Mammary epithelial cell (primary cell): ENCODE measurements at regions of chr12 and their contacts with region 1.

Region 1: DNA sequence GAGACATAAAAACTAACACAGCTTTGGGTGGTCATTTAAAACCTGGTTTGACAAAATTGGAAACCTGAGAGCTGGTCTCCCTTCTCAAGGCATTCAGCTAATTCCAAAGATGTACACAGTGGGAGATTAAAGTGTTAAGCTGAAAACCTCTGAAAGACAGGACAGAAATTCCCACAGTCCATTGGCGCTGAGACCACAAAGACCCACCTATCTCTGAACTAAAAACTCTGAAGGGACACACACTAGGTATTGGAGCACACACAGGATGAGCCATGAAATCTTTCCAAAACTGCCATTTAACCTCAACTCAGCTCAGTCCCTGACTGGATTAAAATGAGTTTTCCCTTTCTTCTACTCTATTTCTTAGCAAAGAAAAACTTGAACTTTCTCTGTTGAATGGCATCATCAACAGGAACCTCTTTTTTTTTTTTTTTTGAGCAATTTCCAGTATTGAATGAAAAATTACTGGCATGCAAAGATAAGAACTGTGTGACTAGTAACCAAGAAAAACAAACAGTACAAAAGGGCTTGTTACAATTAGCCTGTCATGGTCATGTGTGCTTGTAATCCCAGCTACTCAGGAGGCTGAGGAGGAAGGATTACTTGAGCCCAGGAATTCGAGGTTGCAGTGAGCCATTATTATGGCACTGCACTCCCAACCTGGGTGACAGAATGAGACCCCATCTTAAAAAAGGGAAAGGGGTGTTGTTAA is 82.4 kb downstream of the IPO8 start:
- DNase-seq: peak; percentile 17
- H3K4me3 ChIP-seq: no peak overlapping the region
- H3K27ac ChIP-seq: no peak overlapping the region
- H3K4me1 ChIP-seq: no peaks in the 10 kb centered on the region
- H3K27me3 ChIP-seq: peaks cover 2% of the 10 kb centered on the region
- CTCF ChIP-seq: no peak

Region 2: DNA sequence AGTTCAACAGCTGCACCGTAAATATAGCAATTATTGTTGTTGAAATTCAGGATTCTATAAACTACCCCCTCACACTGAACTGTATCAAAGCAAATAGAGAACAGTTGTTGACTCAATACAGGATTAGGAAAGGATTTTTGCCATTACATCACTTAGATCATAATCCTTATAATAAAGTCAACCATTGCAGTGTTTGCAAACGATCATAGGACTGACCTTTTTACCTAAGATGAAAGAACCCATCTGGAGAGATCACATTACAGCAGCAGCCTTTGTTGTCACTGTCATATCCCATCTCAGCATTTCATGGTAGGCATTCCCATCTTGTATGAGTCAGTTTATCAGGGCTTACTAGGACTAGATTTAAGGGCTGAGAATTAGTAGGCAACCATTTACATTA is 13.7 kb before region 1 on chr12:
- CTCF ChIA-PET with region 1: interaction called, 11 read pairs
- dilution Hi-C with region 1: no loop called
- in situ Hi-C with region 1: no loop called
- intact Hi-C with region 1: no loop called
- DNase-seq: no peak
- H3K4me3 ChIP-seq: no peak overlapping the region
- H3K27ac ChIP-seq: no peak overlapping the region
- H3K4me1 ChIP-seq: no peaks in the 10 kb centered on the region
- H3K27me3 ChIP-seq: no peaks in the 10 kb centered on the region
- CTCF ChIP-seq: no peak

Region 3: DNA sequence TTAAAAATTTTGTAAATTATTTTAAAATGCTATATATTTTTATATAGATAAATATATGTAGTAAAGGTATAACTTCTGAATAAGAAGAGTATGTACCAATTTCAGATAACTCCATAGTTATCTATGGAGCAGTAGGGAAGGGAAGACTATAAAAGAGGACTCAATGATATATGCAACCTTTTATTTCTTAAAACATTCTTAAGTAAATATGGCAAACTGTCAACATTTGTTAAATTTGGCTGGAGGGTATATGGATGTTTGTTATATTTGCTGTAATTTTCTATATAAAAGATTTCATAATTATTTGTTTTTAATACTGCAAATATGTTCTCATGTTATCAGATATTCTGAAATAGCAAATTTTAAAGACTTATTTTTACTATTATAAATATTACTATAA is 275.0 kb after region 1 on chr12:
- CTCF ChIA-PET with region 1: no interaction called
- dilution Hi-C with region 1: no loop called
- in situ Hi-C with region 1: no loop called
- intact Hi-C with region 1: no loop called
- DNase-seq: no peak
- H3K4me3 ChIP-seq: no peak overlapping the region
- H3K27ac ChIP-seq: no peak overlapping the region
- H3K4me1 ChIP-seq: no peaks in the 10 kb centered on the region
- H3K27me3 ChIP-seq: no peaks in the 10 kb centered on the region
- CTCF ChIP-seq: no peak